A549 (cell line): ENCODE measurements at regions of chr5 and their contacts with region 1.

Region 1: GRCh38 chr5:34898258-34898895 is 16.9 kb downstream of the RAD1 start:
- DNase-seq: peak; percentile 56 to 69
- ATAC-seq: peak; percentile 95 to 96
- H3K4me3 ChIP-seq: no peak overlapping the region
- H3K27ac ChIP-seq: no peak overlapping the region
- H3K4me1 ChIP-seq: no peaks in the 10 kb centered on the region
- CTCF ChIP-seq: peak; percentile 89
- EP300 ChIP-seq: no peak
- POLR2A ChIP-seq: no peak
- RAD21 ChIP-seq: peak; percentile 95 to 96

Region 2: GRCh38 chr5:33850100-33850594 is 1048.2 kb before region 1 on chr5:
- CTCF ChIA-PET with region 1: no interaction called
- POLR2A ChIA-PET with region 1: no interaction called
- DNase-seq: peak in 1 of 2 experiments; percentile 54
- ATAC-seq: peak; percentile 45 to 66; a peak in 3 of 6 replicates
- H3K4me3 ChIP-seq: no peak overlapping the region
- H3K27ac ChIP-seq: peak overlapping the region; percentile 72 to 75
- H3K4me1 ChIP-seq: peaks cover 24% of the 10 kb centered on the region
- CTCF ChIP-seq: no peak
- EP300 ChIP-seq: no peak
- POLR2A ChIP-seq: no peak
- RAD21 ChIP-seq: no peak

Region 3: GRCh38 chr5:34486160-34486848 is 412.1 kb before region 1 on chr5:
- CTCF ChIA-PET with region 1: interaction called, 621 read pairs
- POLR2A ChIA-PET with region 1: no interaction called
- DNase-seq: peak; percentile 83 to 87
- ATAC-seq: peak; percentile 82 to 86
- H3K4me3 ChIP-seq: no peak overlapping the region
- H3K27ac ChIP-seq: peak overlapping the region; percentile 57 to 62; a peak in 5 of 6 replicates
- H3K4me1 ChIP-seq: peaks cover 28% of the 10 kb centered on the region
- CTCF ChIP-seq: peak; percentile 96
- EP300 ChIP-seq: no peak
- POLR2A ChIP-seq: no peak
- RAD21 ChIP-seq: peak; percentile 97

Region 4: DNA sequence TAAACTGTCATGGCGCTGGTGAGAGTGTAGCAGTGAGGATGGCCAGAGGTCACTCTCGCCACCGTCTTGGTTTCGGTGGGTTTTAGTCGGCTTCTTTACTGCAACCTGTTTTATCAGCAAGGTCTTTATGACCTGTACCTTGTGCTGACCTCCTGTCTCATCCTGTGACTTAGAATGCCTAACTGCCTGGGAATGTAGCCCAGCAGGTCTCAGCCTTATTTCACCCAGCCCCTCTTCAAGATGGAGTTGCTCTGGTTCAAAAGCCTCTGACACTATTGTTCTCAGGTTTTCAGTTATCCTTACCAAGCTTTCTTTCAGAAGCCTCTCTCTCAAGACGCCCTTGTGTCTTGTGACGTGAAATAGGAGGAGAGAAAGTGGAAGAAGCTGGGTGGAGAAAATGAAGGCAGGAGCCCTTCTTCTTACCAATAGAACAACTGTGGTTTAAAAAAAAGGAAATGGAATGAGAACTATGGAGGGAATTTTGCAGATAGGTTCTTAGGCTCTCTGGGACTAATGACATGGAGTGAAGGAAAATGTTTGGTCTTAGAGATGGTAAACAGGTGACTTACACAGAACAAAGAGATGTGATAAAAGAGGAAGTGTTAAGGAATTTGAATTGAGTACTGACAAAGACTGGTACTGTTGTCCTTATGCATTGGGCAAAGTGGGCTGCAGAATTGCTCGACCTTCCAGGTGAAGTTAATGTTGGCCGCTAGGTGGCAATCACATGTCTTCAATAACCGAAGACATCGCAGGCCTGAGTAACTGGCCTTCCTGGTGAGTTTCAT is 375.6 kb before region 1 on chr5:
- CTCF ChIA-PET with region 1: interaction called, 24 read pairs
- POLR2A ChIA-PET with region 1: no interaction called
- DNase-seq: peak; percentile 80 to 86
- ATAC-seq: peak; percentile 94 to 96
- H3K4me3 ChIP-seq: no peak overlapping the region
- H3K27ac ChIP-seq: peak overlapping the region; percentile 68 to 82
- H3K4me1 ChIP-seq: peaks cover 40% of the 10 kb centered on the region
- CTCF ChIP-seq: peak; percentile 85
- EP300 ChIP-seq: no peak
- POLR2A ChIP-seq: no peak
- RAD21 ChIP-seq: peak; percentile 95 to 97

Region 5: DNA sequence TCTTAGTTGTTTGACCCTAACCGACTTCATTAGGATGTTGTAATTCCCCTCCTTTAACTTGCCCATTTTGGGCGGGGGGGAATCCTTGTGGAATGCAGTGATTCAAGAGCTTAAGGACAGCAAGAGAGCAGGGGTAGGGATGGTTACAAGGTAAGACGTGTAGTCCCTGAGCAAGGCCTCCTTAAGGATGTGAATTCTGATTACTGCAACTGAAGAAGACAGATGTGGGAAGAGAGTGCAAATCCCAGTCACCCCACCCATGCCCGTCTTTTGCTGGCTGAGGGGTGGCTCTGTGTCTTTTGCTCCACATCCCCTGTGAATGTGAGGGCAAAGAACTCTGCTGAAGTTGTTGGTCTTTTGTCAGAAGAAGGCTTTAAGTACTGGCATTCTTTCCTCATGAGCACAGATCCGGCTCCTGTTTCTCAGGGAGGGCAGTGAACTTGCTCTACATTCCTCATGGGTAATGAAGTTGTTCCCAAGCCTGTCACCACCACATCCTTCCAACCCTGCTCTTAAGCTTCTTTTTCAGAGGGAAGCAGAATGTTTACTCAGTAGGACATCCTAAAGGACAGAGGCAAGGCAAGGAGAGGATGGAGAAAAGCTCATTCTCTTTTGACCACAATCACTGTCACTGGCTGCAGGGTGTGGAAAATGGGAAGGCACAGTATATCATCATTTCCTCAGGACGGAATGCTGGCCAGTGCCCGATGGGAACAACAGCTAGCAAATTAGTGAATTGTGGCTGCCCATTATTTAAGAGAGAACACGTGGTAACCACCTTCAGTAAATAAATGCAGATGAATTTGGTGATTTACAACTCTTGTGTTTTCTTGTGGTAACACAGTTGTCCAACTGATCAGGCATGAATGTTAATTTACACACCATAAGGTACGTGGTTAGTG is 180.7 kb before region 1 on chr5:
- CTCF ChIA-PET with region 1: interaction called, 10 read pairs
- POLR2A ChIA-PET with region 1: no interaction called
- DNase-seq: peak in 1 of 2 experiments; percentile 47
- ATAC-seq: peak in 1 of 2 experiments; percentile 68; a peak in 3 of 6 replicates
- H3K4me3 ChIP-seq: no peak overlapping the region
- H3K27ac ChIP-seq: peak overlapping the region in 1 of 2 experiments; percentile 52; a peak in 2 of 6 replicates
- H3K4me1 ChIP-seq: peaks cover 32% of the 10 kb centered on the region
- CTCF ChIP-seq: no peak
- EP300 ChIP-seq: no peak
- POLR2A ChIP-seq: no peak
- RAD21 ChIP-seq: no peak

Region 6: DNA sequence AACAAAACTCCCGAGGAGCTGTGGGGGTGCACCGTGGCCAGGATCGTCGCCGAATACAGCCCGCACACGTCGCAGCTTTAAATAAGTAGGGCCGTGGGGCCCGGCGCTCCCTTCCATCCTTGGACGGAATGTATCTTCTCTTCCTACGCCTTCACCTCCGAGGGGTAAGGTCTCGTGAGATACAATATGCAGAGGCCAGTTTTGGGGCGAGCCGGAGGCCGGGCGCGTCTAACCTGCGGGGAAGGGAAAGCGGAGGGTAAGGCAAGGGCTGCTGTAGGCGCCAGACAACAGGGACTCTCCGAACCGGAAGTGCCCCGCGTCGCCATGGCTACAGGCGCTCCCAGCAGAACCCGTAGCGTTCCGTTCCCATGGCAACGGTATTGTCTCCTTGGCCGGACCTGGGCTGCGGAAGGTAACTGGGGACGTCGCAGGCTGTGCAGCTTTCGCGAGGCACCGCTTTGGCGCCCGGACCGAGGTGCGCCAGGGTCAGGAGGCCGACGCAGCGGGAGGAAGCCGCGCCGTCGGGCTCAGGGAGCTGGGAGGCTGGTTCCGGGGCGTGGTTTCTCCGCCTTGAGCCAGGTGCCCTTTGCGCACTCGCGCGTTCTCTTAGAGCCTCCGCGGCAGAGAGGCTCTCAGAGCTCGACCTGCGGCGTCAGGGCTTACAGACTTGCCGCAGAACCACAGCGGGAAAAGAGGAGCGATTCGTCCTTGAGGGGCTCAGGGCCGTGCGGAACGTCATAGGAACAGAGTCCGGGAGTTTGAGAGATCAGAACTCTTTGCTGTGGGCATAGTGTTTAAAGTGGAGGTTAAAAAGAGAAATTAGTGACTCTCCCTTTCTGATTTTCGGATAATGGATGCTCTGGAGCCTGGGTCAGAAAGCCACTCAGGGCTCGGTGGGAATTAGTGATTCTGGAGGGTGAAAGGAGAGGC is 59.3 kb before region 1 on chr5 and contains the start of gene TTC23L:
- CTCF ChIA-PET with region 1: interaction called, 12 read pairs
- POLR2A ChIA-PET with region 1: no interaction called
- DNase-seq: peak; percentile 92
- ATAC-seq: peak; percentile 96
- H3K4me3 ChIP-seq: peak within 1 kb of the TSS; percentile 62
- H3K27ac ChIP-seq: peak within 1 kb of the TSS; percentile 79 to 90
- H3K4me1 ChIP-seq: no peaks in the 10 kb centered on the region
- CTCF ChIP-seq: no peak
- EP300 ChIP-seq: no peak
- POLR2A ChIP-seq: peak; percentile 84
- RAD21 ChIP-seq: no peak
- polyA plus RNA-seq, gene TTC23L: 0.25 and 0.59 TPM in 2 replicates

Region 7: GRCh38 chr5:34881246-34881645 is 17.1 kb before region 1 on chr5:
- CTCF ChIA-PET with region 1: interaction called, 32 read pairs
- POLR2A ChIA-PET with region 1: no interaction called
- DNase-seq: no peak
- ATAC-seq: no peak
- H3K4me3 ChIP-seq: no peak overlapping the region
- H3K27ac ChIP-seq: no peak overlapping the region
- H3K4me1 ChIP-seq: no peaks in the 10 kb centered on the region
- CTCF ChIP-seq: no peak
- EP300 ChIP-seq: no peak
- POLR2A ChIP-seq: no peak
- RAD21 ChIP-seq: no peak

Region 8: GRCh38 chr5:36334315-36334714 is 1435.9 kb after region 1 on chr5:
- CTCF ChIA-PET with region 1: no interaction called
- POLR2A ChIA-PET with region 1: no interaction called
- DNase-seq: no peak
- ATAC-seq: no peak
- H3K4me3 ChIP-seq: no peak overlapping the region
- H3K27ac ChIP-seq: no peak overlapping the region
- H3K4me1 ChIP-seq: no peaks in the 10 kb centered on the region
- CTCF ChIP-seq: no peak
- EP300 ChIP-seq: no peak
- POLR2A ChIP-seq: no peak
- RAD21 ChIP-seq: no peak